SK-N-SH (cell line): ENCODE measurements at regions of chr17 and their contacts with region 1.

Region 1: GRCh38 chr17:7296189-7296902 is 1.9 kb upstream of the YBX2 start:
- DNase-seq: peak; percentile 92
- H3K4me3 ChIP-seq: peak overlapping the region in 1 of 2 experiments; percentile 37; a peak in 1 of 4 replicates
- H3K27ac ChIP-seq: no peak overlapping the region
- H3K4me1 ChIP-seq: peaks cover 3 to 8% of the 10 kb centered on the region in 2 experiments; a peak in 1 of 4 replicates
- H3K27me3 ChIP-seq: peaks cover 24% of the 10 kb centered on the region; the same call in 1 of the 2 replicates
- CTCF ChIP-seq: peak; percentile 88
- EP300 ChIP-seq: no peak
- RAD21 ChIP-seq: peak; percentile 92

Region 2: GRCh38 chr17:7214300-7215135 is 81.8 kb before region 1 on chr17:
- CTCF ChIA-PET with region 1: interaction called, 29 read pairs
- POLR2A ChIA-PET with region 1: no interaction called
- DNase-seq: peak; percentile 91
- H3K4me3 ChIP-seq: peak overlapping the region; percentile 56 to 64
- H3K27ac ChIP-seq: peak overlapping the region; percentile 88 to 96
- H3K4me1 ChIP-seq: peaks cover 26 to 54% of the 10 kb centered on the region in 2 experiments; a peak in 3 of 4 replicates
- H3K27me3 ChIP-seq: no peaks in the 10 kb centered on the region
- CTCF ChIP-seq: peak; percentile 64
- EP300 ChIP-seq: no peak; a peak in 1 of 4 replicates
- RAD21 ChIP-seq: peak; percentile 24; the same call in 1 of the 2 replicates

Region 3: GRCh38 chr17:7239091-7240027 is 57.0 kb before region 1 on chr17 and contains the start of gene PHF23:
- CTCF ChIA-PET with region 1: interaction called, 35 read pairs
- POLR2A ChIA-PET with region 1: interaction called, 3 read pairs
- DNase-seq: peak; percentile 94
- H3K4me3 ChIP-seq: peak within 1 kb of the TSS; percentile 88 to 99
- H3K27ac ChIP-seq: peak within 1 kb of the TSS; percentile 75 to 99
- H3K4me1 ChIP-seq: peaks cover 36 to 41% of the 10 kb centered on the region in 2 experiments
- H3K27me3 ChIP-seq: no peaks in the 10 kb centered on the region
- CTCF ChIP-seq: no peak
- EP300 ChIP-seq: no peak
- RAD21 ChIP-seq: no peak
- polyA plus RNA-seq, gene PHF23: 53.3 and 58.5 TPM in 2 replicates

Region 4: GRCh38 chr17:7261172-7261927 is 35.0 kb before region 1 on chr17:
- CTCF ChIA-PET with region 1: interaction called, 16 read pairs
- POLR2A ChIA-PET with region 1: no interaction called
- DNase-seq: peak; percentile 76
- H3K4me3 ChIP-seq: peak overlapping the region in 1 of 2 experiments; percentile 7; a peak in 1 of 4 replicates
- H3K27ac ChIP-seq: no peak overlapping the region
- H3K4me1 ChIP-seq: peaks cover 0 to 6% of the 10 kb centered on the region in 2 experiments; a peak in 2 of 4 replicates
- H3K27me3 ChIP-seq: no peaks in the 10 kb centered on the region
- CTCF ChIP-seq: no peak
- EP300 ChIP-seq: no peak
- RAD21 ChIP-seq: no peak

Region 5: GRCh38 chr17:7280519-7281429 is 15.6 kb before region 1 on chr17:
- CTCF ChIA-PET with region 1: interaction called, 169 read pairs
- POLR2A ChIA-PET with region 1: interaction called, 5 read pairs
- DNase-seq: peak; percentile 84
- H3K4me3 ChIP-seq: peak overlapping the region; percentile 50 to 64
- H3K27ac ChIP-seq: peak overlapping the region in 1 of 2 experiments; percentile 52; a peak in 1 of 4 replicates
- H3K4me1 ChIP-seq: peaks cover 6 to 18% of the 10 kb centered on the region in 2 experiments; a peak in 2 of 4 replicates
- H3K27me3 ChIP-seq: no peaks in the 10 kb centered on the region
- CTCF ChIP-seq: peak; percentile 72
- EP300 ChIP-seq: no peak
- RAD21 ChIP-seq: peak; percentile 93